Gastrocnemius medialis (tissue), 4 donors: ENCODE measurements at regions of chr11 and their contacts with region 1.

Region 1: GRCh38 chr11:8732748-8733241 is 50.2 kb downstream of the RPL27A start:
- DNase-seq: peak; percentile 41 to 75
- ATAC-seq: peak; percentile 84 to 86
- H3K4me3 ChIP-seq: no peak overlapping the region
- H3K27ac ChIP-seq: peak overlapping the region; percentile 72 to 76 (median 74)
- H3K4me1 ChIP-seq: peaks cover 18 to 32% of the 10 kb centered on the region in 2 donors
- H3K27me3 ChIP-seq: no peaks in the 10 kb centered on the region
- CTCF ChIP-seq: no peak
- POLR2A ChIP-seq: no peak

Region 2: DNA sequence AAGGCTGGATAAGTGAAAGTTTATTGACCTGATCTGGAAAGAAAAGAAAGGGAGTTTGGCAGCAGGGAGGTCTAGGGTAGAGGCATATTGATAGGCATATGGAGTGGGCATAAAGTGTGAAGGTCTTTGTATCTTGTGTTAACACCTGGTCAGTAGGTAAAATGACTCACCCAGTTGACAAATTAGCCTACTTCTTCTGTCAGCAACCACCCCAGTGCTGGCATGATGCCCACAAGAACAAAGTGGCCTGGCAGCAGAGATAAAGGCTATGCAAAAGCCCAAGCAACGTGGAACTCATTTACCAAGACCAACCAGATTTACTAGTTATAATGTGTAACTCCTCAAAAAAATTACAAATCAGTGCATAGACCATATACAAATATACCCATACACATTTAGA is 796.2 kb before region 1 on chr11:
- in situ Hi-C with region 1: no loop called
- intact Hi-C with region 1: no loop called
- DNase-seq: no peak
- ATAC-seq: no peak
- H3K4me3 ChIP-seq: no peak overlapping the region
- H3K27ac ChIP-seq: no peak overlapping the region
- H3K4me1 ChIP-seq: no peaks in the 10 kb centered on the region
- H3K27me3 ChIP-seq: no peaks in the 10 kb centered on the region
- CTCF ChIP-seq: no peak
- POLR2A ChIP-seq: no peak

Region 3: GRCh38 chr11:8757035-8757434 is 24.2 kb after region 1 on chr11:
- in situ Hi-C with region 1: no loop called
- intact Hi-C with region 1: loop called (anchors 2 kb)
- DNase-seq: no peak
- ATAC-seq: peak; percentile 18 to 56
- H3K4me3 ChIP-seq: no peak overlapping the region
- H3K27ac ChIP-seq: peak overlapping the region; percentile 26 to 76 (median 57)
- H3K4me1 ChIP-seq: peaks cover 42 to 45% of the 10 kb centered on the region in 2 donors
- H3K27me3 ChIP-seq: no peaks in the 10 kb centered on the region
- CTCF ChIP-seq: no peak
- POLR2A ChIP-seq: no peak